Endothelial cell of umbilical vein (primary cell): ENCODE measurements at regions of chr22 and their contacts with region 1.

Region 1: GRCh38 chr22:44975427-44976262 is 34.2 kb downstream of the PHF21B start:
- DNase-seq: peak; percentile 58
- H3K4me3 ChIP-seq: no peak overlapping the region
- H3K27ac ChIP-seq: no peak overlapping the region
- H3K4me1 ChIP-seq: no peaks in the 10 kb centered on the region
- H3K27me3 ChIP-seq: no peaks in the 10 kb centered on the region
- CTCF ChIP-seq: peak; percentile 77 to 86
- POLR2A ChIP-seq: no peak

Region 2: DNA sequence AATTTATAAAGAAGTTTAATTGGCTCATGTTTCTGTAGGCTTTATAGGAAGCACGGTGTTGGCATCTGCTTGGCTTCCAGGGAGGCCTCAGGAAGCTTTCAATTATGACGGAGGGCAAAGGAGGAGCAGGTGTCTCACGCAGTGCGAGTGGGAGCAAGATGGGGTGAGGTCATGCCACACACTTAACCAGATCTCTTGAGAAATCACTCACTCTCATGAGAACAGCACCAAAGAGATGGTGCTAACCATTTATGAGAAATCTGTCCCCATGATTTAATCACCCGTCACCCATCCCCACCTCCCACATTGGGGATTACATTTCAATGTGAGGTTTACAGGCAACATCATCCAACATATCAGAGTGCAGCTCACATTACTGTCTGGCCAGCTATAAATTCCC is 119.8 kb before region 1 on chr22:
- CTCF ChIA-PET with region 1: no interaction called
- POLR2A ChIA-PET with region 1: no interaction called
- dilution Hi-C with region 1: no loop called
- intact Hi-C with region 1: no loop called
- DNase-seq: no peak
- H3K4me3 ChIP-seq: no peak overlapping the region
- H3K27ac ChIP-seq: no peak overlapping the region
- H3K4me1 ChIP-seq: no peaks in the 10 kb centered on the region
- H3K27me3 ChIP-seq: no peaks in the 10 kb centered on the region
- CTCF ChIP-seq: no peak
- POLR2A ChIP-seq: no peak

Region 3: GRCh38 chr22:45082795-45083194 is 107.2 kb after region 1 on chr22:
- CTCF ChIA-PET with region 1: no interaction called
- POLR2A ChIA-PET with region 1: no interaction called
- dilution Hi-C with region 1: no loop called
- intact Hi-C with region 1: loop called (anchors 1 kb)
- DNase-seq: no peak
- H3K4me3 ChIP-seq: no peak overlapping the region
- H3K27ac ChIP-seq: no peak overlapping the region
- H3K4me1 ChIP-seq: no peaks in the 10 kb centered on the region
- H3K27me3 ChIP-seq: no peaks in the 10 kb centered on the region
- CTCF ChIP-seq: peak; percentile 5 to 22
- POLR2A ChIP-seq: no peak

Region 4: GRCh38 chr22:45553351-45554039 is 577.9 kb after region 1 on chr22:
- CTCF ChIA-PET with region 1: no interaction called
- POLR2A ChIA-PET with region 1: no interaction called
- dilution Hi-C with region 1: no loop called
- intact Hi-C with region 1: loop called (anchors 1 kb)
- DNase-seq: peak; percentile 71
- H3K4me3 ChIP-seq: no peak overlapping the region
- H3K27ac ChIP-seq: no peak overlapping the region
- H3K4me1 ChIP-seq: no peaks in the 10 kb centered on the region
- H3K27me3 ChIP-seq: no peaks in the 10 kb centered on the region
- CTCF ChIP-seq: peak; percentile 91 to 98
- POLR2A ChIP-seq: no peak